ENCODE measurements at regions of chr19 and their contacts with region 1.

Region 1: GRCh38 chr19:10835754-10836477 is at the start of gene TMED1:
- DNase-seq: peak; percentile 100
- H3K4me3 Mint-ChIP-seq: peak within 1 kb of the TSS; percentile 95
- H3K27ac Mint-ChIP-seq: peak within 1 kb of the TSS; percentile 100
- H3K4me1 Mint-ChIP-seq: peaks cover 8% of the 10 kb centered on the region
- H3K27me3 Mint-ChIP-seq: no peaks in the 10 kb centered on the region
- CTCF ChIP-seq: no peak
- total RNA-seq, gene TMED1: 16.5 and 23.2 TPM in 2 replicates

Region 2: GRCh38 chr19:10701955-10702525 is 133.9 kb before region 1 on chr19:
- CTCF ChIA-PET with region 1: interaction called, 4 read pairs
- POLR2A ChIA-PET with region 1: interaction called, 10 read pairs
- intact Hi-C with region 1: no loop called
- DNase-seq: no peak
- H3K4me3 Mint-ChIP-seq: peak overlapping the region; percentile 82
- H3K27ac Mint-ChIP-seq: peak overlapping the region; percentile 72
- H3K4me1 Mint-ChIP-seq: no peaks in the 10 kb centered on the region
- H3K27me3 Mint-ChIP-seq: no peaks in the 10 kb centered on the region
- CTCF ChIP-seq: no peak

Region 3: DNA sequence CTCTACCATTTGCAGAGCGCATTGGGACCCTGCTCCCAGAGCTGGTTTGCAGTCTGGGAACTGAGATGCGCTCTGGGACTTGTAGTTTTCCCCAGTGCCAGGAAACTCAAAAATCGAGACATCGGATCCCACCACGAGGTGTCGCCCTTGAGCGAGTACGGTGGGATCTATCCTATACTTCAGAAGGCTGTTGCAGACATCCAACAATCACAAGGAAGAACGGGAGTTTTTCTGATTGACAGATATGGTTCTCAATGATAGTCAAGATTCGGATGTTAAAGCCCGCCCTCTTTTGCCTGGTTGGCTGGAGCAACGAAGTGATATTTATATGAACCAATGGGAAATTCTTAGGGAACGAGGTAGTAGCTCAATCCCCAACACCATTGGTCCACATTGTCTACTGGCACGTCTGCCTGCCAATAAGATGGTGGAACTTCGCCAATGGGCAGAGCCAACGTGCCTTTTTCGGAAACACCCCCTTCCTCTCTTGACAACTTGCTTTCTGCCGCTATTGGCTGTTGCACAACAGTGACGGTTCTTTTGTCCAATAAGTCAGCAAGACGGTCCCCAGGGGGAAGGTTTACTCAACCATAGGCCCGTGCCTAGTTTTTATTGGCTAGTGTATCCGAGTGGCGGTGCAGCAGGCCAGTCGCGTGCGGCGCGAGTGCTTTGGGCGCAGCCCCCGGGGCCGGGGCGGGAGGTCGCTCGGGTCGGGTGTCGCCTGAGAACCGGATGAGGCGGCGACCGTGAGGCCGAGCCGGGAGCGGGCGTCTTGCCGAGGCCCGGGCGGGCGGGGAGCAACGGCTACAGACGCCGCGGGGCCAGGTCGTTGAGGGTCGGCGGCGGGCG is 118.3 kb before region 1 on chr19 and contains the start of gene DNM2:
- CTCF ChIA-PET with region 1: interaction called, 18 read pairs
- POLR2A ChIA-PET with region 1: interaction called, 29 read pairs
- intact Hi-C with region 1: loop called (anchors 1 kb)
- DNase-seq: peak; percentile 100
- H3K4me3 Mint-ChIP-seq: peak within 1 kb of the TSS; percentile 86
- H3K27ac Mint-ChIP-seq: peak within 1 kb of the TSS; percentile 86
- H3K4me1 Mint-ChIP-seq: peaks cover 15% of the 10 kb centered on the region
- H3K27me3 Mint-ChIP-seq: no peaks in the 10 kb centered on the region
- CTCF ChIP-seq: peak; percentile 62
- total RNA-seq, gene DNM2: 114 and 125 TPM in 2 replicates

Region 4: GRCh38 chr19:10769533-10770491 is 66.1 kb before region 1 on chr19:
- CTCF ChIA-PET with region 1: no interaction called
- POLR2A ChIA-PET with region 1: no interaction called
- intact Hi-C with region 1: no loop called
- DNase-seq: peak; percentile 29
- H3K4me3 Mint-ChIP-seq: no peak overlapping the region
- H3K27ac Mint-ChIP-seq: peak overlapping the region; percentile 78
- H3K4me1 Mint-ChIP-seq: peaks cover 6% of the 10 kb centered on the region
- H3K27me3 Mint-ChIP-seq: no peaks in the 10 kb centered on the region
- CTCF ChIP-seq: no peak

Region 5: GRCh38 chr19:10855879-10856522 is 20.1 kb after region 1 on chr19:
- CTCF ChIA-PET with region 1: interaction called, 10 read pairs
- POLR2A ChIA-PET with region 1: interaction called, 9 read pairs
- intact Hi-C with region 1: no loop called
- DNase-seq: peak; percentile 38
- H3K4me3 Mint-ChIP-seq: no peak overlapping the region
- H3K27ac Mint-ChIP-seq: no peak overlapping the region
- H3K4me1 Mint-ChIP-seq: no peaks in the 10 kb centered on the region
- H3K27me3 Mint-ChIP-seq: no peaks in the 10 kb centered on the region
- CTCF ChIP-seq: peak; percentile 27

Region 6: GRCh38 chr19:10864538-10864899 is 28.6 kb after region 1 on chr19:
- CTCF ChIA-PET with region 1: interaction called, 62 read pairs
- POLR2A ChIA-PET with region 1: interaction called, 28 read pairs
- intact Hi-C with region 1: no loop called
- DNase-seq: peak; percentile 85
- H3K4me3 Mint-ChIP-seq: no peak overlapping the region
- H3K27ac Mint-ChIP-seq: peak overlapping the region; percentile 37
- H3K4me1 Mint-ChIP-seq: peaks cover 17% of the 10 kb centered on the region
- H3K27me3 Mint-ChIP-seq: no peaks in the 10 kb centered on the region
- CTCF ChIP-seq: peak; percentile 89

Region 7: DNA sequence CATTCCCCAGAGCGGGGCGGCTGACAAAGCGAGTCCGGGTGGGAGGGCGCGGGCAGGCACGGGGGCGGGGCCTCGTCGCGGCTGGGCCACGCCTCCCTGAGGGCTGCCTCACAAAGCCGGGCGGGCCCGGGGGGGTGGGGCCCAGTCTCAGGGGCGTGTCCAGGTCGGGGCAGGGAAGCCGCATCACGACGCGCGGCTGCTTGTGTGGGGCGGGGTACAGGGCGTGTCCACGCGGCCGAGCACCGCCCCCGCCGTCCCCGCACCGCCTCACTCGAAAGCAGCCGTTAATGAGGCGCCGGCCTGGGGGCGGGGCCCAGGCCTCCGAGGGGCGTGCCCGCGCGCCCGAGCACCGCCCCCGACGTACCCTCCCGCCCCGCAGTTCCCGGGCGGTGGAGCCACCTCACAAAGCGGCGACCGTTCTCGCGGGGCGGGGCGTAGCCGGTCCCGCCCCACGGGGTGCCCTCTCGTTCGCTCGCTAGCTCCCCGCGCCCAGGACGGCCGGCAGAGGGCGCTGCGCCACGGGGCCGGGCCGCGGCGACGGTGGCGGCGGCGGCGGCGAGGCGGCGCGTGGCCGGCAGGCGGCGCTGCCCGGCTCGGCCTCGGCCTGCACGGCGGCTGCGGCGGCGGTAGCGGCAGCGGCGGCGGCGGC is 35.2 kb after region 1 on chr19 and contains the start of gene CARM1:
- CTCF ChIA-PET with region 1: interaction called, 62 read pairs
- POLR2A ChIA-PET with region 1: interaction called, 29 read pairs
- intact Hi-C with region 1: no loop called
- DNase-seq: peak; percentile 98
- H3K4me3 Mint-ChIP-seq: peak within 1 kb of the TSS; percentile 75
- H3K27ac Mint-ChIP-seq: peak within 1 kb of the TSS; percentile 75
- H3K4me1 Mint-ChIP-seq: no peaks in the 10 kb centered on the region
- H3K27me3 Mint-ChIP-seq: no peaks in the 10 kb centered on the region
- CTCF ChIP-seq: peak; percentile 52
- total RNA-seq, gene CARM1: 49.5 and 51.7 TPM in 2 replicates

Region 8: GRCh38 chr19:10899151-10899653 is 63.3 kb after region 1 on chr19:
- CTCF ChIA-PET with region 1: no interaction called
- POLR2A ChIA-PET with region 1: no interaction called
- intact Hi-C with region 1: no loop called
- DNase-seq: peak; percentile 85
- H3K4me3 Mint-ChIP-seq: peak overlapping the region; percentile 62
- H3K27ac Mint-ChIP-seq: peak overlapping the region; percentile 95
- H3K4me1 Mint-ChIP-seq: peaks cover 13% of the 10 kb centered on the region
- H3K27me3 Mint-ChIP-seq: no peaks in the 10 kb centered on the region
- CTCF ChIP-seq: no peak